Naive thymus-derived CD4-positive, alpha-beta T cell (primary cell): ENCODE measurements at regions of chr1 and their contacts with region 1.

Region 1: GRCh38 chr1:40802078-40802741 is 18.6 kb downstream of the KCNQ4 start:
- DNase-seq: peak; percentile 76 to 87 (median 84)
- ATAC-seq: peak; percentile 98
- H3K4me3 ChIP-seq: peak overlapping the region; percentile 65
- H3K4me3 Mint-ChIP-seq: peak overlapping the region; percentile 70 to 89 (median 78)
- H3K27ac ChIP-seq: peak overlapping the region; percentile 77
- H3K27ac Mint-ChIP-seq: peak overlapping the region; percentile 69 to 92 (median 87)
- H3K4me1 ChIP-seq: peaks cover 16 to 21% of the 10 kb centered on the region in 2 donors
- H3K4me1 Mint-ChIP-seq: peaks cover 15 to 41% (median 31%) of the 10 kb centered on the region in 7 donors
- H3K27me3 ChIP-seq: no peaks in the 10 kb centered on the region
- H3K27me3 Mint-ChIP-seq: peaks cover 0 to 2% (median 0%) of the 10 kb centered on the region in 5 donors

Region 2: DNA sequence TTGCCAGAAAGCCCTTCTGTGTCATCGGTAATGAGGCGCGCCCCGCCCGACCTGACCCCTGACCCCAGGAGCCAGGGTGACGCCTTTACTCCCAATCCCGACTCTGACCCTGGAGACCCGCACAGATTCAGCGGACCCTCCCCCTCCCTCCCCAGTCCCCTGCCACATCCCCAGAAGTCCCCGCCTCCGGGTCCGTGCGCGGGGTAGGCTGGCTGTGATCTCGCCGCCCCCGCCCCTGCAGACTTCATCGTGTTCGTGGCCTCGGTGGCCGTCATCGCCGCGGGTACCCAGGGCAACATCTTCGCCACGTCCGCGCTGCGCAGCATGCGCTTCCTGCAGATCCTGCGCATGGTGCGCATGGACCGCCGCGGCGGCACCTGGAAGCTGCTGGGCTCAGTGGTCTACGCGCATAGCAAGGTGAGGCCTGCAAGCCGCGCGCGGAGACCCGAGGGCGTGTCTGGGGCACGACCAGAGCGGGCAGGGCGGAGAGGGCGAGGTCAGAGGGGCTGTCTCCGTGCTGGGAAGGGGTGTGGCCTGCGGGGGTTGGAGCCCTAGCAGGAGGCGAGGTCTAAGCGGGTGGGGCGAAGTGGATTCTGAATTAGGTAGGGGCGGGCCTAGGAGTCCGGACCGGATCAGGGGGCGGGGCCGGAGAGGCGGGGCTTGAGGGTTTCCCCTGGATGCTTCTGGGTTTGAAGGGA is 16.2 kb after region 1 on chr1:
- CTCF ChIA-PET with region 1: interaction called, 3 read pairs
- POLR2A ChIA-PET with region 1: interaction called, 4 read pairs
- intact Hi-C with region 1: loop called (anchors 1 kb)
- DNase-seq: peak; percentile 66 to 90 (median 86)
- ATAC-seq: peak; percentile 98
- H3K4me3 ChIP-seq: peak overlapping the region; percentile 68
- H3K4me3 Mint-ChIP-seq: peak overlapping the region; percentile 76 to 89 (median 83)
- H3K27ac ChIP-seq: peak overlapping the region; percentile 50
- H3K27ac Mint-ChIP-seq: peak overlapping the region; percentile 74 to 89 (median 83)
- H3K4me1 ChIP-seq: peaks cover 0 to 5% of the 10 kb centered on the region in 2 donors
- H3K4me1 Mint-ChIP-seq: peaks cover 0 to 21% (median 11%) of the 10 kb centered on the region in 7 donors
- H3K27me3 ChIP-seq: no peaks in the 10 kb centered on the region
- H3K27me3 Mint-ChIP-seq: peaks cover 0 to 8% (median 0%) of the 10 kb centered on the region in 5 donors

Region 3: DNA sequence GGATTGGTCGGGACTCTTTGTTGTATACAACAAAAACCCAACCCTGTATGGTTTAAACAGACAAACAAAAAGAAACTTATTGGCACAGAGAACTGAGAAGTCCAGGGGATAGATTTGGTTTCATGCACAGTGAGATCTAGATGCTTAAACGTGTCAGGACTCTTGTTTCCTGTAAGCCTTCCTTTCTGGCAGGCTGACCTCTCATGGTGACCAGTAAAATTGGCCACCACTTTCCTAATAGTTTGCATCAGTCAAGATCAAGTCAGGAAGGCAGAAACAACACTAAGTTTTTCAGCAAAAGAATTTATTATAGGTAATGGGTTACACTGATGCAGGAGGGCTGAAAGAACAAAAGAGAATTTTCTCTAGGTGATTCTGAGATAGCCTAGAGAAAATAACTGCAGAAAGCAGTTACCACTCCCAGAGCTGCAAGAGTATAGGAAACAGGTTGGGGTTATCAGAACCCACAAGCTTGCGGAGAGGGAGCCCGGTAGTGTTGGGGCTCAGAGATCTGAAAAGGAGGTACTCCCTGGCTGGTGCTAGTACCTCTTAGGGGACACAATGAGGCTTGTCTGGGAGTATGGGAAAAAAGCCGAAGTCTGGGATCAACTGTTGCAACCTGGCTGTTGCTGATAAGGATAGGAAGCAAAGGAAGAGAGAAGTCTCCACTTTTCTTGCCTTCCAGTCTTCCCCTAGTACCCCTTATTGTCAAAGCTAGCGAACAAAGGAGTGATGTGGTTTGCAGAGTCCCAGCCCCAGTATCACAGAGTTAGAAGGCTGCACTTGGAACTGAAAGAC is 38.5 kb after region 1 on chr1:
- CTCF ChIA-PET with region 1: no interaction called
- POLR2A ChIA-PET with region 1: no interaction called
- intact Hi-C with region 1: loop called in 1 of 2 experiments (anchors 2 kb)
- DNase-seq: peak in 6 of 9 donors; percentile 20 to 62 (median 52)
- ATAC-seq: peak; percentile 71
- H3K4me3 ChIP-seq: no peak overlapping the region
- H3K4me3 Mint-ChIP-seq: peak overlapping the region; percentile 16 to 78 (median 64)
- H3K27ac ChIP-seq: peak overlapping the region; percentile 2
- H3K27ac Mint-ChIP-seq: peak overlapping the region; percentile 19 to 84 (median 65)
- H3K4me1 ChIP-seq: peaks cover 3 to 26% of the 10 kb centered on the region in 2 donors
- H3K4me1 Mint-ChIP-seq: peaks cover 20 to 44% (median 39%) of the 10 kb centered on the region in 7 donors
- H3K27me3 ChIP-seq: no peaks in the 10 kb centered on the region
- H3K27me3 Mint-ChIP-seq: peaks cover 0 to 5% (median 0%) of the 10 kb centered on the region in 5 donors

Region 4: GRCh38 chr1:40884055-40884795 is 82.0 kb after region 1 on chr1:
- CTCF ChIA-PET with region 1: no interaction called
- POLR2A ChIA-PET with region 1: no interaction called
- intact Hi-C with region 1: no loop called
- DNase-seq: no peak
- ATAC-seq: no peak
- H3K4me3 ChIP-seq: no peak overlapping the region
- H3K4me3 Mint-ChIP-seq: peak overlapping the region in 9 of 10 donors; percentile 3 to 80 (median 68)
- H3K27ac ChIP-seq: no peak overlapping the region
- H3K27ac Mint-ChIP-seq: no peak overlapping the region
- H3K4me1 ChIP-seq: no peaks in the 10 kb centered on the region
- H3K4me1 Mint-ChIP-seq: peaks cover 0 to 18% (median 5%) of the 10 kb centered on the region in 7 donors
- H3K27me3 ChIP-seq: peaks cover 0 to 8% of the 10 kb centered on the region in 2 donors
- H3K27me3 Mint-ChIP-seq: peaks cover 46 to 62% (median 48%) of the 10 kb centered on the region in 5 donors

Region 5: GRCh38 chr1:41322835-41323627 is 520.8 kb after region 1 on chr1:
- CTCF ChIA-PET with region 1: no interaction called
- POLR2A ChIA-PET with region 1: no interaction called
- intact Hi-C with region 1: no loop called
- DNase-seq: peak in 4 of 9 donors; percentile 5 to 13 (median 7)
- ATAC-seq: peak; percentile 57
- H3K4me3 ChIP-seq: no peak overlapping the region
- H3K4me3 Mint-ChIP-seq: no peak overlapping the region
- H3K27ac ChIP-seq: no peak overlapping the region
- H3K27ac Mint-ChIP-seq: no peak overlapping the region
- H3K4me1 ChIP-seq: no peaks in the 10 kb centered on the region
- H3K4me1 Mint-ChIP-seq: no peaks in the 10 kb centered on the region
- H3K27me3 ChIP-seq: no peaks in the 10 kb centered on the region
- H3K27me3 Mint-ChIP-seq: peaks cover 0 to 5% (median 4%) of the 10 kb centered on the region in 5 donors